Heart left ventricle (tissue), 16 donors: ENCODE measurements at regions of chr1 and their contacts with region 1.

Region 1: GRCh38 chr1:223114871-223115270 is 28.2 kb downstream of the TLR5 start:
- DNase-seq: peak in 3 of 5 donors; percentile 39 to 54 (median 44)
- ATAC-seq: peak; percentile 76 to 92 (median 84)
- H3K4me3 ChIP-seq: no peak overlapping the region
- H3K27ac ChIP-seq: peak overlapping the region; percentile 47 to 82 (median 72)
- H3K4me1 ChIP-seq: peaks cover 0 to 17% (median 7%) of the 10 kb centered on the region in 12 donors
- H3K27me3 ChIP-seq: no peaks in the 10 kb centered on the region
- CTCF ChIP-seq: no peak
- POLR2A ChIP-seq: no peak

Region 2: DNA sequence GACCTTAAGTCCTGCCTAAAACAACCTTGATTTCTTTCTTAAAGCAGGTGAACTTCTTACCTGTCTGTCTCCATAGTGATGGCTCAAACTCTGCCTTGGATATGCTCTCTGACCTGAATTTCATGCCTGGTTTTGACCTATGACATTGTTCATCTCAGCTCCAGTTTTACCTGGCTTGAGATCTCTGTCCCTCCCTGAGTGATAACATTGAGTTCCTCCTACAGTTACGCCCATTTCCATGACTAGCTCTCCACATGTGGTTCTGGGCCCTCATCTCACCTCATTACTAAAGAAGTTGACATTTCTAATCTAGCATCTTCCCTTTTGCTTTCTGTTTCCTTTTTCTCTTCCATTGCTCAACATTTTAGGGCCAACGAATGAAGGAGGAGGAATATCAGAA is 800.0 kb before region 1 on chr1:
- intact Hi-C with region 1: no loop called
- DNase-seq: no peak
- ATAC-seq: no peak
- H3K4me3 ChIP-seq: no peak overlapping the region
- H3K27ac ChIP-seq: no peak overlapping the region
- H3K4me1 ChIP-seq: peaks cover 0 to 7% (median 3%) of the 10 kb centered on the region in 12 donors
- H3K27me3 ChIP-seq: no peaks in the 10 kb centered on the region
- CTCF ChIP-seq: no peak
- POLR2A ChIP-seq: no peak

Region 3: GRCh38 chr1:223102797-223103533 is 11.9 kb before region 1 on chr1:
- intact Hi-C with region 1: loop called in 1 of 10 experiments (anchors 2 kb)
- DNase-seq: peak in 4 of 5 donors; percentile 36 to 74 (median 64)
- ATAC-seq: peak; percentile 83 to 94 (median 88)
- H3K4me3 ChIP-seq: no peak overlapping the region
- H3K27ac ChIP-seq: peak overlapping the region in 4 of 12 donors; percentile 9 to 30 (median 22)
- H3K4me1 ChIP-seq: peaks cover 0 to 26% (median 10%) of the 10 kb centered on the region in 12 donors
- H3K27me3 ChIP-seq: no peaks in the 10 kb centered on the region
- CTCF ChIP-seq: no peak
- POLR2A ChIP-seq: peak in 1 of 2 donors; percentile 28